ENCODE measurements at regions of chr3 and their contacts with region 1.

Region 1: DNA sequence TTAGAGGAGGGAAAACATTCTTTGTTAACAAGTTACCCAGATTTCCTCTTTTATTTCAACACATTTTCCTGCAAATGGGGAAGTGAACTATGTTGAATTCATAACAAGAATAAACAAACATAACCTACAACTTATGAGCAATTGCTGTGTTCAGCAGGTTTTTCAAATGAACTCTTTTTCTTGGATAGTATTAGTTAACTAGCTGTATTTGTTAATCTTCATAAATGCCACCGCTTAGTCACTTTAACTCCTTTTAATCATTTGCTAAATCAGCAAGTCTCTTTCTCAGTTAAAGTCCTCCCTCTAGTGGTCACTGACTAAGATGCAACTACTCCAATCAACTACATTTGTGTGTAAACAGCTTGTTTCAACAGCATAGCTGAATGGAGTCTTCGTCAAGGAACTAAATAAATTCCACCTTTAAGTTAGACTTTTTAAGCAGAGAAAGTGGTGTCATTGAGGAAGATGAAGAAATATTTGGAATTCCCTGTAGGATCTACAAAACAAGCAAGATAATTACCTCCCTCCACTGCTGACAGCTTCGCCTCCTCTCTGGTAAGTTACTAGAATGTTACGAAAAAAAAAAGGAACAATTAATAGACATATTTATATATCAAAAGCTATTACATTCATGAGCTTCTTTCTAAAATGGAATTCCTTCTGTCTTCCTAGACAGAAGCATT is 1122.0 kb downstream of the ROBO1 start:
- DNase-seq: peak; percentile 41
- H3K4me3 ChIP-seq: no peak overlapping the region
- H3K27me3 ChIP-seq: no peaks in the 10 kb centered on the region
- CTCF ChIP-seq: peak; percentile 75

Region 2: DNA sequence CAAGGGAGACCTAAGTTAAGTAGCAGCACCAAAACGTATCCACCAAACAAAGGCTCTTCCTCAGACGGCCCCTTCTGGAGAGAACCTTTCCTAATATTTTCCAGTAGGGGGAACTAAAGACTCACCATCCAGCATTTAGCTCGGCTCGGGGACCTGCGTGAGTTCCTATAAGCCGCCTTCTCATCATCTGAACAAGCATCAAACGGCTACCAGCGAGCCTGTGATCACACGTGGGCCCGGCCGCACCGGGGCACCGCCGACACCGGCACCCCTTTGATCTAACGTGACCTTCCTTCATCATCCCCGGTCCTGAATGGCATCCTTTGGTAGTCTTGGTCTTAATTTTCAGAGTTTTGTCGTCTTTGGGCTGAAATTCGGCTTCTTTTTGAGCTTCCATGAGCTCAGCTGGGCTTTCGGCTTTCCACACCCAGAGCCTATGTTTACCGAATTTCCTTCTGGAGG is 1607.3 kb before region 1 on chr3:
- CTCF ChIA-PET with region 1: interaction called, 15 read pairs
- POLR2A ChIA-PET with region 1: no interaction called
- DNase-seq: peak; percentile 44
- H3K4me3 ChIP-seq: peak overlapping the region; percentile 59
- H3K27me3 ChIP-seq: peaks cover 16% of the 10 kb centered on the region
- CTCF ChIP-seq: peak; percentile 68

Region 3: GRCh38 chr3:79019137-79019923 is 373.6 kb after region 1 on chr3:
- CTCF ChIA-PET with region 1: no interaction called
- POLR2A ChIA-PET with region 1: interaction called, 11 read pairs
- DNase-seq: peak; percentile 49
- H3K4me3 ChIP-seq: peak overlapping the region; percentile 88
- H3K27me3 ChIP-seq: no peaks in the 10 kb centered on the region
- CTCF ChIP-seq: no peak